Activated CD4-positive, alpha-beta T cell treated with anti-CD3 and anti-CD28 coated beads, Interleukin-2, amount 10 ng/mL, durations not matched to agents 24 days and 14 days (primary cell): ENCODE measurements at regions of chr10 and their contacts with region 1.

Region 1: DNA sequence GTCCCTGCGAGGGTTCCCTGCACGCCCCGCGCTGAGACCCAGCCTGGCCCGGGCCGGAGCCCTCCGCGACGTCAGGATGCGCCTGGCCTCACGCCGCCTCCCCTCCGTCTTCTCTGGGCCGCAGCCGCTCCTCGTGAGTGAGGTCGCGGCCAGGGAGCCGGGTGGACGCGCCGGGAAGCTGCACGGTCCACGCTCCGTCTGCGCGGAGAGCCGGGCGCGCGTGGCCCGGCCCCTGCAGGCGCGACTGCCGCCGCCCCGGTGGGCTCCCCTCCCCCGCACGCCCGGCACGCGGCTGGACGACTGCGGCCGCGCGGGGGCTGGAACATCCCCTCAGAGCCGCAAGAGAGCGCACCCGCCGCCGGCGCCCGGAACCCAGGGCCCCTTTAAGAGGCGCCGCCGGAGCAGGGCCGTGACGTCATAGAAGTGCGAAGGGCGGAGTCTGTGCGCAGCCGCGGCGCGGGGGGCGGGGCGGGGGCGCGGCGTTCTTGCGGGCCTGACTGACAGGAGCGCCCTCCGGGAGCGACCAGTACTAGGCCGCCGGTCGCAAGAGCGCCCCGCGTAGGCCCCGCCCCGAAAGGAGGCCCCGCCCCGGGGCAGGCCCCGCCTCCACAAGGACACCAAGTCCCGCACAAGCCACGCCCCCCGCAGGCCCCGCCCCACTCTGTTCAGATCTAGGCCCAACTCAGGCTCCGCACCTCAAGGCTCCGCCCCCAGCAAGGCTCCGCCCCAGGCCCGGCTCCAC is 445 bp upstream of the INPP5A start:
- DNase-seq: peak; percentile 100
- H3K4me3 Mint-ChIP-seq: peak overlapping the region; percentile 73
- H3K27ac Mint-ChIP-seq: no peak overlapping the region
- H3K4me1 Mint-ChIP-seq: peaks cover 44% of the 10 kb centered on the region
- H3K27me3 Mint-ChIP-seq: peaks cover 11% of the 10 kb centered on the region

Region 2: GRCh38 chr10:132185601-132186487 is 351.3 kb before region 1 on chr10:
- intact Hi-C with region 1: loop called (anchors 1 kb)
- DNase-seq: peak; percentile 93
- H3K4me3 Mint-ChIP-seq: peak overlapping the region; percentile 80
- H3K27ac Mint-ChIP-seq: no peak overlapping the region
- H3K4me1 Mint-ChIP-seq: peaks cover 16% of the 10 kb centered on the region
- H3K27me3 Mint-ChIP-seq: peaks cover 37% of the 10 kb centered on the region

Region 3: GRCh38 chr10:132331526-132332432 is 205.4 kb before region 1 on chr10 and contains the start of gene LRRC27:
- intact Hi-C with region 1: loop called (anchors 5 kb)
- DNase-seq: peak; percentile 100
- H3K4me3 Mint-ChIP-seq: peak within 1 kb of the TSS; percentile 88
- H3K27ac Mint-ChIP-seq: peak within 1 kb of the TSS; percentile 96
- H3K4me1 Mint-ChIP-seq: peaks cover 50% of the 10 kb centered on the region
- H3K27me3 Mint-ChIP-seq: peaks cover 4% of the 10 kb centered on the region
- total RNA-seq, gene LRRC27: 2.3 and 3.3 TPM in 2 replicates

Region 4: DNA sequence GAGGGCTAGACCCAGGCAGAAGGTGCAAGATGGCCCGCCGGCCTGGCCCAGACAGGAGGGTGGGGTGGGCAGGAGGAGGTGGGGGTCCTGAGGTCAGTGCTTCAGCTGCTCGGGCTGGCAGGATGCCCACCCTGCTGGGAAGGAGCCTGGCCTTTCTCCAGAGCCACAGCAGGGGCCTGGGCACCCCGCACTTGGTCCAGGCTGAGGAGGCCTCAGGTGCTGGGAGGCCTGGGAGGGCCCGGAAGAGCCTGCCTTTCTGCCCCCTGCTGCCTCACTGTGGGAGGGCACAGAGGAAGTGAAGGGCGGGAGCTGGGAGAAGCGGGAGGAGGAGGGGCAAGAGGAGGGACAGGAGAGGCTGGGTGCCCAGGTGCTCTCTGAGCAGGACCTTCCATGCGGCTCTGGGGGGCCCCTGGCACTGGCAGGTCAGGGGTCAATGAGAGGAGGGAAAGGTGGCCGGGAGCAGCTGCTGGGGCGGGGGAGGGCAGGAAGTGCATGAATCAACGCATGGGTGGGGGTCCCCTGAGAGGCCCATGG is 90.4 kb before region 1 on chr10:
- intact Hi-C with region 1: loop called (anchors 1 kb)
- DNase-seq: peak; percentile 91
- H3K4me3 Mint-ChIP-seq: peak overlapping the region; percentile 76
- H3K27ac Mint-ChIP-seq: peak overlapping the region; percentile 97
- H3K4me1 Mint-ChIP-seq: peaks cover 29% of the 10 kb centered on the region
- H3K27me3 Mint-ChIP-seq: no peaks in the 10 kb centered on the region

Region 5: DNA sequence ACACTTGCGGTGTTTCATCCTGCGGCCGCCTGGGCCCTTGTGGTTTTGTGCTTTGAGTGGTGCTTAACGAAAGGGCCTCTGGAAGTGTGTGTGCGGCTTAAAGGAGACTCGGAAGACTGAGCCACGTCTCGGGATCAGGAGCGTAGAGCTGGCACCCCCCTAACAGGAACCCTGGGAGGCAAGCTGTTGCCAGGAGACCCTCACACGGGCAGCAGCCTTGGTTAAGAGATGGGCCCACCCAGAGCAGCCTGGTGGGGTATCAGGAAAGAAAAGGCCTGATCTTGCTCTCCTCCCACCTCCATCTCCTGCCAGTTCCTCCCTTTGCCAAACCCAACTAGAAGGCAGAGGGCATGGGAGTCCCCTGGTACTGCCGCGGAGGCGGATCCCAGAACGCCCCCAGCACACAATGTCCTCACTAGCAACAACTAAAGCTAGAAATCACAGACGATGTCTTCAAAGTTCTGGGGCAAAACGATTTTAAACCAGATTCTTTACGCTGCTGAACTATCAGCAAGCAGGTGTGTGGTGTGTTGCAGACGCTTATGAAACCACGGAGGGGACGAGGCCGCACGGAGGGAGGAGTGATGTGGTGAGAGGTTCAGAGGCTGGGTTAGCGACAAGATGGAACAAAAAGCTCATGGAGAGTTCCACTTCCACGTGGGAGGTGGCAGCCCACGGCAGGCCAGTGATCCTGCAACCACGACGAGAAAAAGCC is 66.6 kb before region 1 on chr10:
- intact Hi-C with region 1: no loop called
- DNase-seq: no peak
- H3K4me3 Mint-ChIP-seq: no peak overlapping the region
- H3K27ac Mint-ChIP-seq: no peak overlapping the region
- H3K4me1 Mint-ChIP-seq: peaks cover 4% of the 10 kb centered on the region
- H3K27me3 Mint-ChIP-seq: peaks cover 14% of the 10 kb centered on the region

Region 6: GRCh38 chr10:132571650-132572535 is 34.8 kb after region 1 on chr10:
- intact Hi-C with region 1: loop called (anchors 1 kb)
- DNase-seq: peak; percentile 90
- H3K4me3 Mint-ChIP-seq: no peak overlapping the region
- H3K27ac Mint-ChIP-seq: peak overlapping the region; percentile 84
- H3K4me1 Mint-ChIP-seq: peaks cover 15% of the 10 kb centered on the region
- H3K27me3 Mint-ChIP-seq: no peaks in the 10 kb centered on the region

Region 7: GRCh38 chr10:132637477-132638129 is 100.5 kb after region 1 on chr10:
- intact Hi-C with region 1: loop called (anchors 10 kb)
- DNase-seq: peak; percentile 76
- H3K4me3 Mint-ChIP-seq: no peak overlapping the region
- H3K27ac Mint-ChIP-seq: no peak overlapping the region
- H3K4me1 Mint-ChIP-seq: peaks cover 15% of the 10 kb centered on the region
- H3K27me3 Mint-ChIP-seq: peaks cover 2% of the 10 kb centered on the region